Adrenal gland (tissue), 19 donors: ENCODE measurements at regions of chr14 and their contacts with region 1.

Region 1: DNA sequence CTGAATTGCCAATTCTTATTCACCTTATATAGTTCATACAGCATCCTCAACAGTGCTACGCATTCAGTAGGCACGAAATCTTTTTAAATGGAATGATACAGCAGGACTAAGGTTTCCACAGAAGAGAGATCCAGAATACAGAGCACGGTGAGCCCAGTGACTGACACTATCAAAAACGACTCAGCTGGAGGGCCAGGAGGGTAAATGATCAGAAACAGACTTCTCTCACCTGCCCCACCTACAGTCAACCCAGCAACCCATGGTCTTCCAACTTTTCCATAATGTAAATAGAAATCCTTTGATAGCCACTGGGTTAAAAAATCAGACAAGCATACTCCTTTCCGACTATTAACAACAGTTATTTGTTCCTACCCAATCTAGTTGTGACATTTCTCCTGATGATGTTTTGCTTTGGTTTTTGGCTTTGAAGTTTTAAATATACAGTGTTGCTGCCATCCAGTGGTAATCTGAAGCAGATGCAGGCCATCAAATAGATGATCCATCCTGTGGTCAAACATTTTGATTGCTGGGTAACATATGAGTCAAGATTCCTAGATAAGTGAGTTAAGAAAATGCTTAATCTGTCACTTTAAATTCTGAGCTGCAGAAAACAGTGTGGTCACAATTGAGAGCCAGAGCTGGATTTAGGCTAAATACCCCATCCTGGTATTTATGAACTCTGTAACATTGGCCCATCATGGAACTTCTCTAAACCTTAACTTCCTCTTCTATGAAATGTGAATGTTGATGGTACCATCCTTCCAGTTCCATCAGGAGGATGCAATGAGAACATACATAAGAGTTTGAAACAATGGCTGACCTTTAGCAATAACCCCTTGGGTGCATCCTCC is 42.0 kb downstream of the GPHB5 start:
- DNase-seq: peak in 1 of 7 donors; percentile 4
- H3K4me3 ChIP-seq: no peak overlapping the region
- H3K27ac ChIP-seq: no peak overlapping the region
- H3K4me1 ChIP-seq: no peaks in the 10 kb centered on the region
- H3K27me3 ChIP-seq: no peaks in the 10 kb centered on the region
- CTCF ChIP-seq: peak; percentile 54 to 92 (median 79)
- POLR2A ChIP-seq: no peak

Region 2: GRCh38 chr14:62162998-62163589 is 1113.6 kb before region 1 on chr14:
- intact Hi-C with region 1: loop called in 1 of 2 experiments (anchors 5 kb)
- DNase-seq: peak in 4 of 7 donors; percentile 12 to 58 (median 21)
- H3K4me3 ChIP-seq: no peak overlapping the region
- H3K27ac ChIP-seq: no peak overlapping the region
- H3K4me1 ChIP-seq: no peaks in the 10 kb centered on the region
- H3K27me3 ChIP-seq: peaks cover 7% of the 10 kb centered on the region
- CTCF ChIP-seq: peak; percentile 42 to 72 (median 65)
- POLR2A ChIP-seq: no peak

Region 3: DNA sequence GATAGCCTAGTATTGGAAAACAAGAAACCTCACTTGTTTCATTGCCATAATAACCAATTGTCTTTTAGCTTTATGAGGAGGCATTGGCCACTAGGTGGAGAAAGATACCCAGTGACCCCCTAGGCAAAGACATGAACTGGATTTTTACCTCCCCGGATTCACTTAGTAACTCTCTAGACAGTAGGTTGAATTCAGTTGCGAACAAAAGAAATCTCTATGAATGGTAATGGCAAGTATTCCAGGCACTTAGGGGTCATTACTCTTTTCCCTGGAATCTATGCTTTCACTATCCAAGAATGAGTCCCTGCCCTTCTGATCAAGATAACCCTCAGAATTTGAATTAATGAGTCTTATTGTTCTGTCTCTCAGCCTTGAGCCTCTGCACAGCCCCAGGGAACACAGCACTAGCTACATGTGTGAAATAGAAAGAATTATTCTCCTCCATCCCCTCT is 101.9 kb before region 1 on chr14:
- intact Hi-C with region 1: loop called in 1 of 2 experiments (anchors 10 kb)
- DNase-seq: peak in 1 of 7 donors; percentile 2
- H3K4me3 ChIP-seq: no peak overlapping the region
- H3K27ac ChIP-seq: no peak overlapping the region
- H3K4me1 ChIP-seq: no peaks in the 10 kb centered on the region
- H3K27me3 ChIP-seq: no peaks in the 10 kb centered on the region
- CTCF ChIP-seq: peak; percentile 5 to 54 (median 38)
- POLR2A ChIP-seq: no peak